Head of caudate nucleus (tissue), 42 donors: ENCODE measurements at regions of chr22 and their contacts with region 1.

Region 1: DNA sequence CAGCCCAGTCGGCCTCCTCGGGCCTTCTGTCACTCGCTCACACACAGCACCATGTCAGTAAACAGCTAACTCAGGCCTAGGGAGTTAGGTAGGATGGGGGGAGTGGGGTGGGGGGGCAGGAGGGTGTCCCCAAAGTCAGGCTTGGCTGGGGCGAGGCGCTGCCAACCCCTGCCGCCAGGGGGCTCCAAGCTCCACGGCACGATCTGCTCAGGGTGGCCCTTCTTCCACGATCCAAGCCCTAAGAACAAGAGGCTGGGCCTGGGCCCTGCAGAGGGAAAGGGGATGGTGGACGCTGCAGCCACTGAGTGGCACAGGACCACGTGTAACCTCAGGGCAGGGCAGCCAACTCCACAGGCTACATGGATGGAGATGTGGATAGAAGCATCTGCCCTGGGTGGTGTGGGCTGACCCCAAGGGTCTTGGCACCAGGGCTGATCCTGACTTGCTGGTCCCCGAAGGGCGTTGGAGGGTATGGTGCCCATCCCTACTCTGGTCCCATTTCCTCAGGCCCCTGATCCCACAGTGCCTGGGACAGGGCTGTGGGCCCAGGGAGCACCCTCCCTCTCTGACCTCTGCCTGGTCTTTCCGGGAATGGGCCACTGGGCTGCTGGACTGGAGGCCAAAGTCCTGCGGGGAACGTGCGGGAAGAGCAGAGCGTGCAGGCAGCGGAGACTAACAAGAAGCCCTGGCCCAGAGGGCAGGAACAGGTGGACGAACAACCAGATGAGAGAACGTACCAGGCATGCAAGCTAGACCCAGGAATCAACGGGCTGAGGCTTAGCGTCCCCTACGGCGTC is 29.1 kb upstream of the TXNRD2 start:
- DNase-seq: peak; percentile 44 to 89 (median 76)

Region 2: DNA sequence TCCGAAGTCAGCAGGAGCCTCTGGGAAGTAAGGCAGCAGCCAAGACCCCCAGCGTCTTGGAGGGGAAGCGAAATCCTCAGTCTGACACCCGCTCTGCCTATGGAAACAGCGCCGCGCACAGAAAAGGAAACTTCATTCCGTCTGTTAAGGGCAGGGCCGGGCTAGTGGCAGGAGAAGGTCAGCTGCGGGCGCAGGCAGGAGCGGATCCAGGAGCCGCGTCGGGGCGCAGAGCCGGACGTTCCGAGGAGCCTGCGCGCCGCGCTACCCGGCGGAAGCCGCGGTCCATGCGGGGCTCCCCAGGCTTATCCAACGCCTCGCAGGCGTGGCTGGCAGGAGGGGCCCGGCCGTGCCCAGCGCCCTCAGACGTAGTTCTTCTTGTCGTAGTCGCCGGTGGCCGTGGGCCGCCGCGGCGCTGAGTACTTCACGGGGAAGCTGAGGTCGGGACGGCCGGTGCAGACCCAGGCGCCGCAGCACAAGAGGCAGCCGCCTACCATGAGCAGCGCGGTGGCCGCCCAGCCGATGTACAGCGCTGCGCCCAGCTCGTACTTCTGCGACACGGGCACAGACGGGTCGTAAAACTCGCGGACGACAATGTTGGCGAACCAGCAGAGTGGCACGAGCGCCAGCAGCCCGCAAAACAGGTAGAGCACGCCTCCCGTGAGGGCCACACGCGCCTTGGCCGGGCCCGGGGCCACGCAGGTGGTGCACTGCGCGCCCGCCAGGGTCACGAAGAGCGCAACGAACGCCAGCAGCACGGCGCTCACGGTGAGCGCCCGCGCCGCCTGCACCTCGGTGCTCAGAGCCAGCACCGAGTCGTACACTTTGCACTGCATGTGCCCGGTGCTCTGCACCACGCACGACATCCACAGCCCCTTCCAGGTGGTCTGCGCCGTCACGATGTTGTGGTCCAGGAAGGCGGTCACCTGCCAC is 447.2 kb before region 1 on chr22:
- intact Hi-C with region 1: no loop called
- DNase-seq: peak in 4 of 42 donors; percentile 16 to 25 (median 21)

Region 3: DNA sequence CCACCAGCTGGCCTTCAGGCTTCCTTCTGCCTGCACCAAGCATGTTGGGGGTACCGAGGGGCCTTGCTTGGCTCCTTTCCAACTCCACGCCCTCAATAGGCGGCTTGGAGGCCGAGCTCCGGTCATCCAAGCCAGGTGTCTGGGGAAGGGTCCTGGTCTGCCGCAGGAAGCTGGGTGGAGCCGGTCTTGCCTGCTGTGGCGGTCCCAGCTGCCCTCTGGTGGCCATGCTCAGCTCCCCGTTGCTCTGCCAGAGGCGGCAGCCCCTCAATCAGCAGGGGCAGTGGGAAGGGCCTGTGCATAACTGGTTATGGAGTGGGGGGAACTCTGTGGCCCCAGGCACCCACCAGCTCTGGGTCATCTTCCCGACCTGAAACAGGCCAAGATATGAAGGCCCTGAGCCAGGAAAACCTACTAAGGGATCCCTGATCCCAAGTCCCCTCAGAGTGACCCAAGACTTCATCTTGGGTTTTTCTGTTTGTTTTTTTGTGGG is 42.8 kb after region 1 on chr22:
- intact Hi-C with region 1: loop called (anchors 2 kb)
- DNase-seq: peak in 40 of 42 donors; percentile 42 to 86 (median 68)

Region 4: DNA sequence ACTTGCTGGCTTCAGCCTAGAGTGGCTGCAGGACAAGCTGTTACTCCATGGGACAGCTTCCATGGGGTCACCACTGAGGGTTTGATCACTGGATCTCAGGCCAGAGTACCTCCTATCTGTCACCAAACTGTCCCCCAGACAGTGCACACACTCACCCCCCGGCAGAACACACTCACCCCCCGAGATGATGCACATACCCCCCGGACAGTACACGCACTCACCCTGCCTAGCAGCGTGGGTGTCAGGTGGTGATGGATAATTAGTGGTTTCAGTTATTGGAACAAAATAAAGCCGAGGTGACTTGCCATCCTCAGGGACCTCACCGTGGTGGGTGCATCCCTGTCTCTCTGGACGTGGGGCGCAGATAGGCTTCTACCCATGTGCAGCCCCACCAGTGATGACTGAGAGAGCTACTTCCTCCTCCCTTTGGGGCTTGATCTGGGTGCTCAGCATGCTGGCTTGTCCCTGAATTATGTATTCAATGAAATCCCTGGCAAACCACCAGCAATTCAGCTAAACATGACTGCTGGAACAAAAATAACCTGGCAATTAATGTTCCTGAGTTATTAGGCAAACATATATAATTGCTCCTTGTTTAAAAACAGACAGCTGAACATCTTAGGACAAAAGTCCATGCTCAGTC is 69.1 kb after region 1 on chr22:
- intact Hi-C with region 1: loop called (anchors 2 kb)
- DNase-seq: no peak